Mammary epithelial cell (primary cell): ENCODE measurements at regions of chr5 and their contacts with region 1.

Region 1: GRCh38 chr5:59188419-59189225 is 605.7 kb downstream of the RAB3C start:
- DNase-seq: peak; percentile 40
- H3K4me3 ChIP-seq: no peak overlapping the region
- H3K27ac ChIP-seq: no peak overlapping the region
- H3K4me1 ChIP-seq: peaks cover 5% of the 10 kb centered on the region
- H3K27me3 ChIP-seq: no peaks in the 10 kb centered on the region
- CTCF ChIP-seq: peak; percentile 54 to 70

Region 2: GRCh38 chr5:59236448-59236847 is 47.8 kb after region 1 on chr5:
- CTCF ChIA-PET with region 1: no interaction called
- dilution Hi-C with region 1: no loop called
- in situ Hi-C with region 1: no loop called
- intact Hi-C with region 1: no loop called
- DNase-seq: no peak
- H3K4me3 ChIP-seq: no peak overlapping the region
- H3K27ac ChIP-seq: no peak overlapping the region
- H3K4me1 ChIP-seq: no peaks in the 10 kb centered on the region
- H3K27me3 ChIP-seq: no peaks in the 10 kb centered on the region
- CTCF ChIP-seq: no peak

Region 3: GRCh38 chr5:59275510-59276324 is 87.1 kb after region 1 on chr5:
- CTCF ChIA-PET with region 1: no interaction called
- dilution Hi-C with region 1: loop called (anchors 5 kb)
- in situ Hi-C with region 1: no loop called
- intact Hi-C with region 1: no loop called
- DNase-seq: peak; percentile 85
- H3K4me3 ChIP-seq: peak overlapping the region; percentile 46 to 93 (median 80)
- H3K27ac ChIP-seq: peak overlapping the region; percentile 95
- H3K4me1 ChIP-seq: peaks cover 8% of the 10 kb centered on the region
- H3K27me3 ChIP-seq: no peaks in the 10 kb centered on the region
- CTCF ChIP-seq: no peak

Region 4: GRCh38 chr5:59367791-59368394 is 179.3 kb after region 1 on chr5:
- CTCF ChIA-PET with region 1: interaction called, 12 read pairs
- dilution Hi-C with region 1: no loop called
- in situ Hi-C with region 1: loop called in 1 of 2 experiments (anchors 10 kb)
- intact Hi-C with region 1: loop called (anchors 1 kb)
- DNase-seq: peak; percentile 44
- H3K4me3 ChIP-seq: no peak overlapping the region
- H3K27ac ChIP-seq: no peak overlapping the region
- H3K4me1 ChIP-seq: no peaks in the 10 kb centered on the region
- H3K27me3 ChIP-seq: no peaks in the 10 kb centered on the region
- CTCF ChIP-seq: peak; percentile 78 to 88

Region 5: DNA sequence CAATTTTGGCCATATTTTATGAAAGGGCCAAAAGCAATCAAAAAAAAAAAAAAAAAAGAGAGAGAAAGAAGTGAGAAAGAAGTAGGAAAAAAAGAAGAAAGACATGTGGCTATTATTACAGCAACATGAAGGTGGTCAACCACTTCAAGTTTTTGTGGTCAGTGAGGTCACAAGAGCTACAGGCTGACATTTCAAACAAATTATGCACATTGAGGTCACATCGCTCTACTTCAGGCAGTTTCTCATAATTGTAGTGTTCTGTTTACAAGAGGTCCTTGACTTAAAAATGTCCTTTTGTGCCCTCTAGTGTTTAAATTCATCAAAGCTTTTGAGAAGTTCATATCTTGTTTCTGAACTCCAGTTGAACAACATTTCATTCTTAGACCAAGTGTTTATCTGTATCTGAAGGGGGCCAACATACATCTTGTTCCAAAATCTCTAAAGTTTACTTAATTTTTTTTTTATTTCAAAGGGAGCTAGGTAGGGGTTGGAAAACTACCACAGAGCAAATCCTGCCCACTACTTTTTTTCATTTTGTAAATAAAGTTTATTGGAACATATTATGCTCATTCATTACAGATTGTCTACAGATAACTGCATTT is 191.8 kb after region 1 on chr5:
- CTCF ChIA-PET with region 1: interaction called, 3 read pairs
- dilution Hi-C with region 1: no loop called
- in situ Hi-C with region 1: loop called (anchors 5 to 10 kb)
- intact Hi-C with region 1: loop called (anchors 1 kb)
- DNase-seq: peak; percentile 71
- H3K4me3 ChIP-seq: no peak overlapping the region
- H3K27ac ChIP-seq: no peak overlapping the region
- H3K4me1 ChIP-seq: peaks cover 2% of the 10 kb centered on the region
- H3K27me3 ChIP-seq: no peaks in the 10 kb centered on the region
- CTCF ChIP-seq: peak; percentile 47 to 50